Tibial artery (tissue), 4 donors: ENCODE measurements at regions of chrX and their contacts with region 1.

Region 1: GRCh38 chrX:108537005-108537404 is 97.4 kb downstream of the COL4A5 start:
- DNase-seq: no peak
- H3K4me3 ChIP-seq: no peak overlapping the region
- H3K27ac ChIP-seq: no peak overlapping the region
- H3K4me1 ChIP-seq: peaks cover 0 to 27% (median 0%) of the 10 kb centered on the region in 4 donors
- H3K27me3 ChIP-seq: no peaks in the 10 kb centered on the region
- CTCF ChIP-seq: peak; percentile 48 to 49

Region 2: GRCh38 chrX:108224727-108225621 is 312.0 kb before region 1 on chrX:
- intact Hi-C with region 1: loop called (anchors 10 kb)
- DNase-seq: no peak
- H3K4me3 ChIP-seq: no peak overlapping the region
- H3K27ac ChIP-seq: peak overlapping the region; percentile 49 to 63
- H3K4me1 ChIP-seq: peaks cover 0 to 50% (median 4%) of the 10 kb centered on the region in 4 donors
- H3K27me3 ChIP-seq: no peaks in the 10 kb centered on the region
- CTCF ChIP-seq: peak; percentile 24 to 32